HEK293 (cell line): ENCODE measurements at regions of chr4 and their contacts with region 1.

Region 1: DNA sequence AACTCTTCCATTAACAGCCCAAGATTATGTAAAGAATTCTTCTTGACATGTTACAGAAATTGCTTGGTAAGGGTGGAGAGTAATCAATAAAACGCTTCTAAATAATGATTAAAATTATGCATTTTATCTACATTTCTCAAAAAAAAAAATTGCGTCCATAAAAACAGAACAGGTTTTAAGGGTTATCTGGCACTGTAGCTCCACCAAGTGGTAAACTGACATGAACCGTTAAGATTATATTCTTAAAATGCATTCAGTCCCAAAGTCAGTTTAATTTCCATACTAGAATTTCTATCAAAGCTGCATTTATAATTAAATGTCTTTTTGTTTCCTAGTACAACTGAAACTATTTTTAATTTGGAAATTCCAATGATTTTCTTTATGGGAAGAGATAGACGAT is 214.0 kb upstream of the UGT8 start:
- H3K4me3 ChIP-seq: no peak overlapping the region
- H3K27ac ChIP-seq: no peak overlapping the region
- H3K4me1 ChIP-seq: no peaks in the 10 kb centered on the region
- CTCF ChIP-seq: no peak

Region 2: DNA sequence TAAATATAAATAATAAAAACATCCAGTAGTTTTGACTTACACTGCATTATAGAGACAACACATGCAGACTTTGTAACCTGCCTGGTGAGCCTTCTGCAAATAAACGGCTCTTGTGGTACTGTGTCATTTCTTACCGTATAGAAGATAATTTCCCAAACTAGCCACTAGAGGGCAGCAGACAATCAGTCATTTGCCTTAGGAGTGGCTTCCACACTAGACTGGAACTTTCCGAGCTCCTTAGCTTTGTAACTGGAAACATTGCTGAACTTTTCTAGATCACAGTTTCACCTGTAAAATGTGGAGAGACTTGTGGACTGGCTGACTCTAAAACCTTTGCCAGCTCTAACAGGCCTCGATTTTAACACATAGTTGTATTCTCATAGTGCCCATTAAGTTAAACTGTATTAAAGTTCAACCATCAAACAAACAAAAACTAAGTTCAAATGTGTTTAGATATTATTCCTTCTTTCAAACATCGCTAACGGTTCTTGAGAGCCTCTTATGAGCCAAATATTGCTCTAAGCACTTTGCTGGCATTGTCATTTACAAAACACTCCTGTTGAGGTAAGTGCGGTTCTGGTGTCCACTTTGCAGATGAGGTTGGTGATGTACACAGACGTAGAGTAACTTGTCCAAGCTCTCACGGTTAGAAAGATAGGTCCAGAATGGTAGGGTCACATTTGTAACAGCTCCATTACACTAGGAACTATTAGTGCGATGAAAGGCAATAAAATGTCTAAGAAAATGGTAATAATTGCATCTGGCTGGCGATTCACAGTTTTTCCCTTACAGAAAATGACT is 989.7 kb before region 1 on chr4:
- CTCF ChIA-PET with region 1: interaction called, 21 read pairs
- POLR2A ChIA-PET with region 1: no interaction called
- H3K4me3 ChIP-seq: no peak overlapping the region
- H3K27ac ChIP-seq: no peak overlapping the region
- H3K4me1 ChIP-seq: no peaks in the 10 kb centered on the region
- CTCF ChIP-seq: 0 out of 2 replicates have a peak, but pooled peaks have one; percentile 22

Region 3: DNA sequence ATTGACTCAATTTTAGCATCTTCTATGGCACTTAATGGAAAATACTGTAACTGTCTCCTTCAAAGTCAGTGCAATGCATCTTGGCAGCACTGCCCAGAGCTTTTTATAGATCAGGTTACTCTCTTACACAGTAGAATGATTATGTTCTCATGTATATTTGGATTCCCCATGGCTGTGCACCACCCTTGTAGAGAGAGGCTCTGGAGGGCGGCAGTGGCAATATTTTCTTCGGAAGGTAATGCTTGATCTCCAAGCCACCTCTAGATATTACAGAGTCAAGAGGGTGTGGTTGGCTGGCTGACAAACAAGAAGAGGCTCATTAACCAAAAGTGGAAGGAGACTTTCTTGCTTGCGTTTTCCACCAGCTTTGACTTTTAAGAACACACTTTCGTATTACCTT is 332.4 kb before region 1 on chr4:
- CTCF ChIA-PET with region 1: no interaction called
- POLR2A ChIA-PET with region 1: no interaction called
- H3K4me3 ChIP-seq: no peak overlapping the region
- H3K27ac ChIP-seq: no peak overlapping the region
- H3K4me1 ChIP-seq: no peaks in the 10 kb centered on the region
- CTCF ChIP-seq: no peak

Region 4: DNA sequence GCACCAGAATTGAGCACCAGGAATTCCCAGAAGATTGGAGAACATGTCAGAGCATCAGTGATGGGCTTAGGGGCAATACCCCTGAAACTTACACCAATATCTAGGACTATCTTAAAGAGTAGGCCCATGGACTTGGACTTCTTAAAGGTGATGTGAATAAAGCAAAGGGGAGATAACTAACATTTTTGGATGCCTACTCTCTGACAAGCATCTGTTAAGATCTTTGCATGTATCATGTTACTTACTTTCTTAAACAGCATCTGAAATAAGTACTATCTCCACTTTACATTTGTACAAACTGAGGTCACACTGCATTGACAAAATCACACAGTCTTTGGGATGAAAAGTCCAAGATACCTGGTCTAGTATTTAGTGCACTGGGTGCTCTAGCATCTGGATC is 146.6 kb before region 1 on chr4:
- CTCF ChIA-PET with region 1: no interaction called
- POLR2A ChIA-PET with region 1: no interaction called
- H3K4me3 ChIP-seq: no peak overlapping the region
- H3K27ac ChIP-seq: no peak overlapping the region
- H3K4me1 ChIP-seq: no peaks in the 10 kb centered on the region
- CTCF ChIP-seq: no peak

Region 5: DNA sequence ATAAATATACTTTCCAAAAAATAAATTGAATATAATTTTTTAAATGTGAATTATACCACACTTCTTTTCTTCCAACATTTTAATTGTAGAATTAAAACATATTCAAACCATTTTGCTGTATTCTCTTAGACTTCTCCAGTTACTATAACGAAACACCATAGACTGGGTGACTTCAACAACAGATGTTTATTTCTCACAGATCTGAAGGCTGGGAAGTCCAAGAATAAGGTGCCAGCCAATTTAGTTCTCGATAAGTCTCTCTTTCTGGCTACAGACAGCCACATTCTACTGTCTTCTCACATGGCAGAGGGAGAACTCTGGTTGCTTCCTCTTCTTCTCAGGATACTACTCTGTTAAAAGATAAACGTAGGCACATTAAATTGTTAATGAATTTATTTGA is 58.2 kb after region 1 on chr4:
- CTCF ChIA-PET with region 1: no interaction called
- POLR2A ChIA-PET with region 1: no interaction called
- H3K4me3 ChIP-seq: no peak overlapping the region
- H3K27ac ChIP-seq: no peak overlapping the region
- H3K4me1 ChIP-seq: no peaks in the 10 kb centered on the region
- CTCF ChIP-seq: no peak

Region 6: GRCh38 chr4:114519368-114519767 is 134.7 kb after region 1 on chr4:
- CTCF ChIA-PET with region 1: no interaction called
- POLR2A ChIA-PET with region 1: no interaction called
- H3K4me3 ChIP-seq: no peak overlapping the region
- H3K27ac ChIP-seq: no peak overlapping the region
- H3K4me1 ChIP-seq: no peaks in the 10 kb centered on the region
- CTCF ChIP-seq: no peak

Region 7: GRCh38 chr4:114659386-114660008 is 274.9 kb after region 1 on chr4:
- CTCF ChIA-PET with region 1: interaction called, 10 read pairs
- POLR2A ChIA-PET with region 1: no interaction called
- H3K4me3 ChIP-seq: no peak overlapping the region
- H3K27ac ChIP-seq: no peak overlapping the region
- H3K4me1 ChIP-seq: peaks cover 3% of the 10 kb centered on the region; the same call in 1 of the 2 replicates
- CTCF ChIP-seq: peak; percentile 54